GM10248 (cell line): ENCODE measurements at regions of chr3 and their contacts with region 1.

Region 1: GRCh38 chr3:122430371-122430770 is 14.5 kb upstream of the WDR5B start:
- DNase-seq: no peak
- CTCF ChIP-seq: no peak

Region 2: DNA sequence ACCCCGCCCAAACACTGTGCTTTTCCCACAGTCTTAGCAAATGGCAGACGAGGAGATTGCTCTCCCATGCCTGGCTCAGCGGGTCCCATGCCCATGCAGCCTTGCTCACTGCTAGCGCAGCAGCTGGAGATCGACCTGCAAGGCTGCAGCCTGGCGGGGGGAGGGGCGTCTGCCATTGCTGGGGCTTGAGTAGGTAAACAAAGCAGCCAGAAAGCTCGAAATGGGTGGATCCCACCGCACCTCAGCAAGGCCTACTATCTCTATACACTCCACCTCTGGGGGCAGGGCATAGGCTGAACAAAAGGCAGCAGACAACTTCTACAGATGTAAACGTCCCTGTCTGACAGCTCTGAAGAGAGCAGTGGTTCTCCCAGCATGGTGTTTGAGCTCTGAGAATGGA is 12.7 kb after region 1 on chr3:
- CTCF ChIA-PET with region 1: interaction called, 11 read pairs
- POLR2A ChIA-PET with region 1: no interaction called
- DNase-seq: no peak
- CTCF ChIP-seq: no peak